Activated CD4-positive, alpha-beta memory T cell treated with anti-CD3 and anti-CD28 coated beads for 36 hours (primary cell): ENCODE measurements at regions of chr11 and their contacts with region 1.

Region 1: DNA sequence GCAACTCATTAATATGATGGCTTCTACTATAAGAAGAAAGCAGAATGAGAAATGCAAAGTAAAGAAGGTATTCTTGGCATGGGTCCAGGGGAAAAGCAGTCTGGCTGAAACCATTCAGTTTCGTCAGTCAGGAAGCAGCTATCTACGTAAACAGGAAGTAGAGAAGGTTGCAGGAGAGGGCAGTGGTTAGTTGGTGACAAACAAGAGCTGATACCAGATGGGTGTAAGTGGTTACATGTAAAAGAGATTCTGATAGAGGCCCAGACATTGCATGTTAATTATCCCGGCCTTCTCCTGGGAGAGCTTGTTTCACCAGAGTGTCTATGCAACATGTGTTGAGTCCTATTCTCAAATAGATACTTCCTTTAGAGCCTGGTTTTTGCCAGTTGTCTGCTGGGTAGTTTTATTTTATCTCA is 58.4 kb upstream of the PSMA1 start:
- DNase-seq: peak; percentile 66
- H3K4me3 Mint-ChIP-seq: peak overlapping the region; percentile 54
- H3K27ac Mint-ChIP-seq: peak overlapping the region; percentile 86
- H3K4me1 Mint-ChIP-seq: peaks cover 49% of the 10 kb centered on the region
- H3K27me3 Mint-ChIP-seq: no peaks in the 10 kb centered on the region

Region 2: GRCh38 chr11:14380947-14381561 is 197.5 kb before region 1 on chr11:
- CTCF ChIA-PET with region 1: no interaction called
- POLR2A ChIA-PET with region 1: no interaction called
- intact Hi-C with region 1: no loop called
- DNase-seq: peak; percentile 58
- H3K4me3 Mint-ChIP-seq: peak overlapping the region; percentile 71
- H3K27ac Mint-ChIP-seq: no peak overlapping the region
- H3K4me1 Mint-ChIP-seq: peaks cover 11% of the 10 kb centered on the region
- H3K27me3 Mint-ChIP-seq: peaks cover 10% of the 10 kb centered on the region

Region 3: DNA sequence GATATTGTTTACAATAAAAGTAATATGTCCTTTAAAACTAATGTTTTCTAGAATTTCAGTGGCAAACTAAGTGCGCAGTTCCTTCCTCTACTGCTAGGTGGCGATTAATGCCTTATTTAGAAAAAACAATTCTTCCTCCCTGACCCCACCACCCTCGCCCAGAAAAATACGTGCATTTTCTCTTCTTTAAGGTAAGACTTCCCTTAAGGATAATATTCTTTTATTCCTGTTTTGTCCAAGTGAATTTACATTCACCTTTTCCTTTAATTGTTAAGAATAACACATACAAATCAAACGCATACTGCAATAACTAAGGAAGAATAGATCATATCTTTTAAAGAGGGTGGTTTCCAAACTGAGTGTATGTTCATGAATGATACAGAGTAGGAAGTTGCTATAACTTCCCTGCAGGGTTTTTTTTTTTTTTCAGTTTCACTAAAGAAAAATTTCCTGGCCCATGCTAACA is 41.4 kb before region 1 on chr11:
- CTCF ChIA-PET with region 1: interaction called, 9 read pairs
- POLR2A ChIA-PET with region 1: no interaction called
- intact Hi-C with region 1: loop called (anchors 2 kb)
- DNase-seq: peak; percentile 42
- H3K4me3 Mint-ChIP-seq: peak overlapping the region; percentile 51
- H3K27ac Mint-ChIP-seq: peak overlapping the region; percentile 76
- H3K4me1 Mint-ChIP-seq: peaks cover 19% of the 10 kb centered on the region
- H3K27me3 Mint-ChIP-seq: no peaks in the 10 kb centered on the region

Region 4: DNA sequence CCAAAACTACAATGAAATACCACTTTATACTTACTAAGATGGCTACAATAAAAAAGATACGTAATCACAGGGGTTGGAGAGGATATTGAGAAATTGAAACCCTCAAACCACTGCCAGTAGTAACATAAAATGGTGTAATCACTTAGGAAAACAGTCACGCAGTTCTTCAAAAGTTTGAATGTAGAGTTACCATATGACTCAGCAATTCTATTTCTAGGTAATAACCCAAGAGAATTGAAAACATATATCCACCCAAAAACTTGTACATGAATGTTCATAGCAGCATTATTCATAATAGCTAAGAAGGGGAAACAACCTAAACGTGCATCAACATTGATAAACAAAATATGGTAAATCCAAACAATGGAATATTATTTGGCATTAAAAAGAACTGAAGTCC is 33.9 kb before region 1 on chr11:
- CTCF ChIA-PET with region 1: interaction called, 4 read pairs
- POLR2A ChIA-PET with region 1: interaction called, 6 read pairs
- intact Hi-C with region 1: loop called (anchors 1 kb)
- DNase-seq: no peak
- H3K4me3 Mint-ChIP-seq: no peak overlapping the region
- H3K27ac Mint-ChIP-seq: peak overlapping the region; percentile 82
- H3K4me1 Mint-ChIP-seq: peaks cover 39% of the 10 kb centered on the region
- H3K27me3 Mint-ChIP-seq: no peaks in the 10 kb centered on the region

Region 5: DNA sequence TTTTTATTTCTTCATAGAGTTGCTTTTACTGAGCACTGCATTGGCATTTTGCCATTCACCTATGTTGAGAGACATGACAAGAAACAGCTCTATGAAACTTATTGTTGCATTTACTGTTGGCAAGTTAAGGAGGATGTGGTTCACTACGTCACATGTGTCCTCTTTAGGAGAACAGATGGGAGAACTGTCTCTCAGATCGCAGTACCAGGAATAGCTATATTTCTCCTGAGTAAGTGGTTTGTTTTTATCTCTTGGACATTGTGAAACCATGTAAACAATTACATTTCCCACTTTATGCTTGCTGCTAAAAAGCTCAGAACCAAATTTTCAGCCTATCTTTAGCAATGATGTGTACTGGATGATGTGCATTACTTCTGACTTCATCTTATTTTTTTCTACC is 23.6 kb before region 1 on chr11:
- CTCF ChIA-PET with region 1: no interaction called
- POLR2A ChIA-PET with region 1: no interaction called
- intact Hi-C with region 1: loop called (anchors 1 kb)
- DNase-seq: no peak
- H3K4me3 Mint-ChIP-seq: no peak overlapping the region
- H3K27ac Mint-ChIP-seq: peak overlapping the region; percentile 66
- H3K4me1 Mint-ChIP-seq: peaks cover 31% of the 10 kb centered on the region
- H3K27me3 Mint-ChIP-seq: no peaks in the 10 kb centered on the region

Region 6: DNA sequence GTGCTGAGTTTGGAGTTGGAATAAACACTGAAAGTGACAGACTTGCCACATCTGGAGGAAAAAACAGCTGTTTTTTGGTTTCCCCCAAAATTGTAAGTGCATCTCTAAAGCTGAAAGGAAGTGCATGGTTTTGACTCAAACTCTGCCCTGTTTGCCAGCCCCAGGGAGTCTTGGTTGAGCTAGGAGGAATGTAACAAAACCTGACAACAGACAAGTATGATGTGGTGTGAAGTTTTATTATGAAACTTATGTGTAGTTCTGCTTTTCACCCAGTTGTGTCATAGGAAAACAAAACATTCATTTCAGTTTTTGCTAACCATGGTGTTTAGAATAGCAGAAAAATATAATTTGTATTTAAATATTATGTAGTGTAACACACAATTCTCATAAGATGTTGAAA is 33.4 kb after region 1 on chr11:
- CTCF ChIA-PET with region 1: no interaction called
- POLR2A ChIA-PET with region 1: no interaction called
- intact Hi-C with region 1: loop called (anchors 1 kb)
- DNase-seq: peak; percentile 46
- H3K4me3 Mint-ChIP-seq: no peak overlapping the region
- H3K27ac Mint-ChIP-seq: no peak overlapping the region
- H3K4me1 Mint-ChIP-seq: peaks cover 23% of the 10 kb centered on the region
- H3K27me3 Mint-ChIP-seq: no peaks in the 10 kb centered on the region

Region 7: DNA sequence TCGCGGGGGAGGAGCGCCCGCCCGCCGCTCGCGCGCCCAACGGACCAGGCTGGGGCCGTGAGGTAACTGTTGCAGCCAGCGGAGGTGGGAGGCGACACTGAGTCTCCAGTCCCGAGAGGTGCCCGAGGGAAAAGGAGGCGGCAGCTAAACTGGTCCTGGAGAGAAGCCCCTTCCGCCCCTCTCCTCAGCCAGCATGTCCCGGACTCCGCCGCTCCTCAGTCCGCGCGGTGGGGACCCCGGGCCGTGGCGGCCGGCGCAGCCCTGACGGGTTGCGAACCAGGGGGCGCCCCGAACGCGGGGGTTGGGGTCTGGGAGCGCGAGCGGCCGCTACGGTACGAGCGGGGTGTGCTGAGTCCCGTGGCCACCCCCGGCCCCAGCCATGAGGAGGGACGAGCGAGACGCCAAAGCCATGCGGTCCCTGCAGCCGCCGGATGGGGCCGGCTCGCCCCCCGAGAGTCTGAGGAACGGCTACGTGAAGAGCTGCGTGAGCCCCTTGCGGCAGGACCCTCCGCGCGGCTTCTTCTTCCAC is 65.2 kb after region 1 on chr11 and contains the start of gene PDE3B:
- CTCF ChIA-PET with region 1: interaction called, 9 read pairs
- POLR2A ChIA-PET with region 1: interaction called, 10 read pairs
- intact Hi-C with region 1: loop called (anchors 2 kb)
- DNase-seq: peak; percentile 87
- H3K4me3 Mint-ChIP-seq: peak within 1 kb of the TSS; percentile 71
- H3K27ac Mint-ChIP-seq: peak within 1 kb of the TSS; percentile 89
- H3K4me1 Mint-ChIP-seq: peaks cover 49% of the 10 kb centered on the region
- H3K27me3 Mint-ChIP-seq: no peaks in the 10 kb centered on the region
- total RNA-seq, gene PDE3B: 21.6 to 21.8 TPM